ENCODE measurements at regions of chr16 and their contacts with region 1.

Region 1: DNA sequence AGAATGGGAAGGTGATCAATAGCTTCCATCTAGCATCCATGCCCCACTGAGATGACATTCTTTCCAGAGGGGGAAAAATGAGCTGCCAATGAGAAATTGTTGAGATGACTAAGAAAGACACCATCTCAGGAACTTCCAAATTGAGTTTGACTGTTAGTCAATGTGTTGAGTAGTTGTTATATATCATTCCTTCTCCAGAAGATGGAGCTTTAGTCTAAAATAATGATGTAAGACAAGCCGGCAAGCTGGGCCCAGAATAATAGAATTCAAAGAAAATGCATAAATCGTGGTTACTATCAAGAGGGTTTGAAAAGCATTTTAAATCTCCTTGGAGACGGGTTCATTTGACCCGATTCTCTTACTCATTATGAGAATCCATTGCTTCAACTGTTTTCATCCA is 71.0 kb upstream of the ATF7IP2 start:
- DNase-seq: peak; percentile 16
- H3K4me3 ChIP-seq: no peak overlapping the region
- CTCF ChIP-seq: peak; percentile 14

Region 2: GRCh38 chr16:10368969-10369551 is 54.2 kb after region 1 on chr16:
- in situ Hi-C with region 1: no loop called
- DNase-seq: no peak
- H3K4me3 ChIP-seq: no peak overlapping the region
- CTCF ChIP-seq: peak; percentile 8

Region 3: GRCh38 chr16:10509534-10510025 is 194.8 kb after region 1 on chr16:
- in situ Hi-C with region 1: loop called (anchors 25 kb)
- DNase-seq: peak; percentile 73
- H3K4me3 ChIP-seq: no peak overlapping the region
- CTCF ChIP-seq: peak; percentile 76